Activated T-helper 2 cell treated with anti-CD3 and anti-CD28 coated beads, Interferon-gamma antibody, Interleukin-2, Interleukin-4, amounts not matched to agents 10 μg/mL and 5 μg/mL and 100 μg/mL, durations not matched to agents 14 hours and 24 hours and 36 hours (primary cell): ENCODE measurements at regions of chr1 and their contacts with region 1.

Region 1: GRCh38 chr1:198400063-198400462 is 140.4 kb downstream of the ATP6V1G3 start:
- DNase-seq: no peak
- H3K4me3 Mint-ChIP-seq: no peak overlapping the region
- H3K27ac Mint-ChIP-seq: no peak overlapping the region
- H3K4me1 Mint-ChIP-seq: no peaks in the 10 kb centered on the region
- H3K27me3 Mint-ChIP-seq: peaks cover 36% of the 10 kb centered on the region

Region 2: GRCh38 chr1:197399755-197400527 is 1000.1 kb before region 1 on chr1:
- intact Hi-C with region 1: loop called (anchors 10 kb)
- DNase-seq: no peak
- H3K4me3 Mint-ChIP-seq: no peak overlapping the region
- H3K27ac Mint-ChIP-seq: no peak overlapping the region
- H3K4me1 Mint-ChIP-seq: no peaks in the 10 kb centered on the region
- H3K27me3 Mint-ChIP-seq: peaks cover 27% of the 10 kb centered on the region